ENCODE measurements at regions of chr3 and their contacts with region 1.

Region 1: DNA sequence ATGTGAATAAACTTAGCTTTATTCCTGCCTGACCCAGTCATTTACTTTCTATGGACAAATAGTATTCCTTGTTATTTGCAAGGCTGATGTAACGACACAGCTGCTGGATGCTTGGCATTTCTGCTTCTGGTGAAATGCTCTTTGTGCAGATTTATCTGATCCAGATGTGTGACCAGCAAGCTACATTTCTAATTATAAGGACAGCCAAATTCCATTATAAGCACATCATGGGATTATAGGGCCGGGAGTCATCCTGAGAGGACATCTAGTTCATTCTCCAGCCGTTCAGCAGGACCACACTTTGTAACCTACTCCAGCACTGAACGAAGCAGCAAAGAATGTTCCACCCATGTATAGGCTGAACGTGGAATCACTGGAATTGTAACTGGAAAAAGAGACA is 42.9 kb downstream of the FNDC3B start:
- DNase-seq: no peak
- ATAC-seq: no peak
- H3K4me3 ChIP-seq: no peak overlapping the region
- H3K4me3 Mint-ChIP-seq: no peak overlapping the region
- H3K27ac ChIP-seq: no peak overlapping the region
- H3K27ac Mint-ChIP-seq: no peak overlapping the region
- H3K4me1 ChIP-seq: peaks cover 0 to under 1% of the 10 kb centered on the region in 2 experiments
- H3K4me1 Mint-ChIP-seq: peaks cover 26 to 35% (median 29%) of the 10 kb centered on the region in 3 donors
- H3K27me3 ChIP-seq: no peaks in the 10 kb centered on the region
- H3K27me3 Mint-ChIP-seq: no peaks in the 10 kb centered on the region

Region 2: DNA sequence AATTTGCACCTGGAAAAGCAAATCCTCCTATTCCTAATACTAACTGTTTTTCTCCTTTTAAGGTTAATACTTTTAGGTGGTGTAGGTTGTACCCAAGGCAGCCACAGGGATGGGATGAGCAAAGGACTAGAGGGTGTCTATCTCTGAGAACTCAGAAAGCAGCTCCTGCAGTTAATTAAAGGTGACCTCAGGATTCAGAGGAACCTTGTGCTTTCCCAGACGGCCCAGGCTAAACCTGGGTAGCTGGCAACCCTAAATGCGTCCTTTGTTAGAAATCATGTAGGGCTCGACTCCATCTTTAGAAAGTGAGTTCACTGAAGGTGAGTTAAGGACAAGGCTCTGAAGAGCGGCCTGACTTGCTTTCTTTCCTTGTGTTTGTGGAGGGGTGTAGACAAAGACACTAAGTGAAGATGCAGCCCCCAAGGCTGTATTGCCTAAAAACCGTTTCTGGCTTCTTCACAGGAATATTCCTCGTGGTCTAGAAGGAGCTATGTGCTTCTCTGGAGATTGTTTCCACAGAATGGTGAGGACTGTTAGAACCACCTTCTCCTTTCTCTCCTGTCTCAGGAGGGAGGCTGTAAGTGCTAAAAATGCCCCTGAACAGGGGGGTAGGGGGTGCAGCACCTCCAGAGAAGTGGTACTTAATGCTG is 28.0 kb before region 1 on chr3:
- CTCF ChIA-PET with region 1: no interaction called
- POLR2A ChIA-PET with region 1: interaction called in 1 of 2 experiments, 11 read pairs
- DNase-seq: no peak
- ATAC-seq: peak in 1 of 4 experiments; percentile 18
- H3K4me3 ChIP-seq: no peak overlapping the region
- H3K4me3 Mint-ChIP-seq: no peak overlapping the region
- H3K27ac ChIP-seq: peak overlapping the region; percentile 15
- H3K27ac Mint-ChIP-seq: peak overlapping the region; percentile 68 to 78
- H3K4me1 ChIP-seq: peaks cover 7 to 9% of the 10 kb centered on the region in 2 experiments
- H3K4me1 Mint-ChIP-seq: peaks cover 35 to 46% (median 40%) of the 10 kb centered on the region in 3 donors
- H3K27me3 ChIP-seq: no peaks in the 10 kb centered on the region
- H3K27me3 Mint-ChIP-seq: no peaks in the 10 kb centered on the region

Measured in T-cell (primary cell).